ENCODE measurements at regions of chr2 and their contacts with region 1.

Region 1: DNA sequence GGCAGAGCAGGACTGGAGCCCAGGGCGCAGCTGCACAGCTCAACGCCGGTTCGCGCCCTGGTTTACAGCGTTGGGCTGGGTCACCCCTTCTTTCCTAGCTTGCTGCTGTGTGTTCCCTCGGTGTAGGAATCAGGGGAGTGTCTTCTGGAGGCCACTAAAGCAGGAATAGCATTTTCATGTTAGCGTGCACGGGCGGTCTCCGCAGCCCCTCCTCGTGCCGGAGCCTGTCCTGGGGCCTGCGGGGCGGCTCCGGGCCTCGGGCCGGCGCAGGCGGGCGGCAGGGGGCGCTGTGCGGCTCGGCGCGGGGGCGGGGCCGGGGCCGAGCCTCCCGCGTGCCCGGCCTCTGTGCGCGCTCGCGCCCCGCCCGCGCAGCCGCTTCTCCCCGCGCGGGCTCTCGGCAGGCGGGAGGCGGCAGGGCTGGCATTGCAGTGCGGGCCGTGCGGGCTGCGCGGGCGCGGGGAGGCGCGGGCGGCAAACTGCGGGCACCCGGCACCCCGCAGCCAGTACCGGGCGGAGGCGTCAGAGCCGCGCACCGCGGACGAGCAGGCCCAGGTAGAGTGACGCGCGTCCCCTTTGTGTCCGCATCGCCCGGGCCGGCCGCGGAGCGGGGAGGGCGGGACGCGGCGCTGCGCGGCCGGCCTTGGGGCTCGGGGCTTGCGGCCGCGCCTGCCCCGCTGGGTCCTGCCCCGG is at the start of gene RNF144A:
- DNase-seq: peak; percentile 48 to 94 (median 72)
- ATAC-seq: peak; percentile 95
- H3K4me3 ChIP-seq: peak within 1 kb of the TSS; percentile 56 to 63
- H3K27ac ChIP-seq: peak within 1 kb of the TSS; percentile 33 to 66
- H3K4me1 ChIP-seq: peaks cover 0 to 21% of the 10 kb centered on the region in 2 donors
- H3K27me3 ChIP-seq: no peaks in the 10 kb centered on the region
- CTCF ChIP-seq: peak in 1 of 2 donors; percentile 65
- polyA plus RNA-seq, gene RNF144A: 28.3 to 36.5 (median 32.8) TPM

Region 2: GRCh38 chr2:6835467-6835866 is 81.7 kb before region 1 on chr2:
- intact Hi-C with region 1: no loop called
- DNase-seq: no peak
- ATAC-seq: no peak
- H3K4me3 ChIP-seq: no peak overlapping the region
- H3K27ac ChIP-seq: no peak overlapping the region
- H3K4me1 ChIP-seq: no peaks in the 10 kb centered on the region
- H3K27me3 ChIP-seq: no peaks in the 10 kb centered on the region
- CTCF ChIP-seq: no peak

Region 3: DNA sequence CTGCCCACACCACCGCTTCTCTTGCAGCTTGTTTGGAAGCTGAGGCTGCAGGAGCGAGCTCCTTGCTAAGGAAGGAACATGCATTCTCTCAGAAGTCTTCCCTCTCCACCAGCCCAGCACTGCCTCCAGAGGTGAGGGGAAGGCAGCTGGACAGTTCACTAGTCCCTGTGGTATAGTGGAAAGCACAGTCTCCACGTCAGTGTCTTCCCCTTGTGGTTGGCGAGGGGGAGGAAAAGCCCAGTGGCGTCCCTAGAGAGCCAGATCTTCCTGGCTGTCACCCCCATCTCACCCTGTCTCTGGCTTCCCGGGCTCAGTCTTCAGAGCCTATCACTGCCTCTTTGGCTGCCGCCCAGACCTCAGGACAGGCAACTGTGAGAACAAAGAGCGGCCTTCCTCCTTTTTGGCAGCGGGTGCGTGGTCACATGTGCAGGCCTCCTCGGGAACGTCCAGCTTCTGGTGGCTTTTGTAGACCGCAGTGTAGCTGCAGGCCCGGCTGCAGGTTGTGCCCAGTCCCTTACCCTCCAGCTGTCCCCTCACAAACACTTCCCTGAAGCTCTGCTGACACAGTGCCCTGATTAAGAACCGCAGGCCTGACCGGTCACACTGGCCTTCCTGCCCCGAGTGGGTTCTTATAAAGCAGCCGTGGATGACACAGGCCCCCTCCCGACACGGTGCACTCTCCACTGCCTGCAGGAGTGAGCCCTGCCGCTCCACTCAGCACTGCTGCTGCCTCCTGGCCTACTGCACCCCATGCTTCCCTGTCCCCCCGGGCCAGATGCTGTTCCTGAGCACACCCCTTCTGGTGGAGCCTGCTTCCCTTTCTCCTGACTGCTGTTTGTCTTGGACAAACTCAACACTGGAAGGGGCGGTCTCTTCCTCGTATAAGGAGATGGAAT is 90.9 kb after region 1 on chr2:
- intact Hi-C with region 1: loop called in 1 of 2 experiments (anchors 5 kb)
- DNase-seq: peak; percentile 59 to 92 (median 78)
- ATAC-seq: peak; percentile 79
- H3K4me3 ChIP-seq: no peak overlapping the region
- H3K27ac ChIP-seq: peak overlapping the region; percentile 18 to 62
- H3K4me1 ChIP-seq: peaks cover 18 to 38% of the 10 kb centered on the region in 2 donors
- H3K27me3 ChIP-seq: no peaks in the 10 kb centered on the region
- CTCF ChIP-seq: peak in 1 of 2 donors; percentile 12

Region 4: DNA sequence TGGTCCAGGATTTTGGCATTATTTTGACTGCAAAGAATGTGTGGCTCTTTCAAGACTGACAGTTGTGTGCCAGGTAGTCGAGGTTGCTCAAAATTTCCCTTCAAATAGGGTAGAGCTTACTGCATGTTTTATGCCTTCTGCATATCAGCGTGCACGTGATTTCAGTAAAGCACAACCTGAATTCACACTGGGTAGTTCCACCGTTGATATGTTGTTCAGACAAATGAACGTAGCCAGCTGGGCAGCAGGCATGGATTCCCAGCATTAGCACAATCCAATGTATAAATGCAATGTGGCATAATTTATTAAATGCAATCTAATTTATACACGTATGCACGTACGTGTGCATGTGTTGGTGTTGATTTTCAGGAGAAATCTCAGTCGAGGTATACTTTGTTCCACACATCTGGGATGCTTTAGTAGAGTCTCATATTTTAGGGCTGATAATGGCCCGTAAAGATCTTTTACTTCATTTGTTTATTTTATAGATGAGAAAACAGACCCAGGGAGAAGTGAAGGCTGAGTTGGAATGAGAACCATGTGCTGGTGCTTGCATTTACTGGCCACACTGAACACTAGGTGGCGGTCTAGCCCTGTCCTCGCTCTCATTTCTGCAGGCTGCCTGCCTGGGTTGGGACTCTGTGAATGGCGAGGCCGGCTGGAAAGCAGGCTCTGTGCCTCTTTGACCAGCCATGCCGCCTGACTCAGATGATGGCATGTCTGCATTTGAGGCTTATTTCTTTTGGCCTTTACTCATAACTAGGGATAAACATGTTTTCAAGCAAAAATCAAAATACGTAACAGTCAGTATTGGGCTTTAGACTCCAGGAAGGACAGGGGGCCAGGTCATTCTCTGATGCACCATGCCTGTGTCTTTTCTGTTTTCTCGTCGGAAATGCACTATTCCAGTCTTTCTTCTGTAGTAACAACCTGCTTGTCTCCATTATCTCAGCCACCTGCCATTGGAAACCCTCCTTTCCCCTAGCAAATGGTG is 120.4 kb after region 1 on chr2:
- intact Hi-C with region 1: loop called in 1 of 2 experiments (anchors 10 kb)
- DNase-seq: peak in 3 of 4 donors; percentile 51 to 74 (median 73)
- ATAC-seq: peak; percentile 94
- H3K4me3 ChIP-seq: no peak overlapping the region
- H3K27ac ChIP-seq: no peak overlapping the region
- H3K4me1 ChIP-seq: no peaks in the 10 kb centered on the region
- H3K27me3 ChIP-seq: no peaks in the 10 kb centered on the region
- CTCF ChIP-seq: peak; percentile 80 to 83

Measured in left lung (tissue), 14 donors.